SK-N-SH (cell line): ENCODE measurements at regions of chr3 and their contacts with region 1.

Region 1: GRCh38 chr3:52220380-52221026 is 4.9 kb downstream of the TLR9 start:
- DNase-seq: peak; percentile 93
- H3K4me3 ChIP-seq: peak overlapping the region in 1 of 2 experiments; percentile 38; a peak in 1 of 4 replicates
- H3K27ac ChIP-seq: no peak overlapping the region
- H3K4me1 ChIP-seq: peaks cover 12 to 19% of the 10 kb centered on the region in 2 experiments; a peak in 3 of 4 replicates
- H3K27me3 ChIP-seq: no peaks in the 10 kb centered on the region
- CTCF ChIP-seq: peak; percentile 88
- EP300 ChIP-seq: no peak
- RAD21 ChIP-seq: peak; percentile 81

Region 2: DNA sequence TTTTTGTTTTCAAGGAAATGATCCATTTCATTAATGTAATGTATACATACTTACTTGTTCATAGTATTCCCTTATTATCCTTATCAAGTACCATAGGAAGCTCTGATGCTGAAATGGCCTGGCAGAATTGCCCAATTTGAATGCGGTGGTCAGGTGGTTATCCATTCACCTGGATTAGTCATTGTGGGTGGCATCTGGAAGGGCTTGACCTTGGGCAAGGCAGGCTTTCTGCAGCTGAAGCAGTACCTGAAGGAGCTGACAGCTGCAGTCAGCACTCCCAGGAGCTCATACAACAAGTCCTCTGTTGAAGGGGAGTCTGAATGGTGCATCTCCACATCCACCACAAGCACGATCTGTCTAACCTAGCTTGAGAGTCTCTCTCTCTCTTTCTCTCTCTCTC is 332.9 kb before region 1 on chr3:
- CTCF ChIA-PET with region 1: no interaction called
- POLR2A ChIA-PET with region 1: no interaction called
- DNase-seq: no peak
- H3K4me3 ChIP-seq: no peak overlapping the region
- H3K27ac ChIP-seq: no peak overlapping the region
- H3K4me1 ChIP-seq: no peaks in the 10 kb centered on the region
- H3K27me3 ChIP-seq: no peaks in the 10 kb centered on the region; the same call in 1 of the 2 replicates
- CTCF ChIP-seq: no peak
- EP300 ChIP-seq: no peak
- RAD21 ChIP-seq: no peak

Region 3: GRCh38 chr3:52204337-52205073 is 16.0 kb before region 1 on chr3:
- CTCF ChIA-PET with region 1: interaction called, 44 read pairs
- POLR2A ChIA-PET with region 1: no interaction called
- DNase-seq: no peak
- H3K4me3 ChIP-seq: no peak overlapping the region
- H3K27ac ChIP-seq: no peak overlapping the region
- H3K4me1 ChIP-seq: no peaks in the 10 kb centered on the region
- H3K27me3 ChIP-seq: no peaks in the 10 kb centered on the region
- CTCF ChIP-seq: no peak
- EP300 ChIP-seq: no peak
- RAD21 ChIP-seq: no peak

Region 4: DNA sequence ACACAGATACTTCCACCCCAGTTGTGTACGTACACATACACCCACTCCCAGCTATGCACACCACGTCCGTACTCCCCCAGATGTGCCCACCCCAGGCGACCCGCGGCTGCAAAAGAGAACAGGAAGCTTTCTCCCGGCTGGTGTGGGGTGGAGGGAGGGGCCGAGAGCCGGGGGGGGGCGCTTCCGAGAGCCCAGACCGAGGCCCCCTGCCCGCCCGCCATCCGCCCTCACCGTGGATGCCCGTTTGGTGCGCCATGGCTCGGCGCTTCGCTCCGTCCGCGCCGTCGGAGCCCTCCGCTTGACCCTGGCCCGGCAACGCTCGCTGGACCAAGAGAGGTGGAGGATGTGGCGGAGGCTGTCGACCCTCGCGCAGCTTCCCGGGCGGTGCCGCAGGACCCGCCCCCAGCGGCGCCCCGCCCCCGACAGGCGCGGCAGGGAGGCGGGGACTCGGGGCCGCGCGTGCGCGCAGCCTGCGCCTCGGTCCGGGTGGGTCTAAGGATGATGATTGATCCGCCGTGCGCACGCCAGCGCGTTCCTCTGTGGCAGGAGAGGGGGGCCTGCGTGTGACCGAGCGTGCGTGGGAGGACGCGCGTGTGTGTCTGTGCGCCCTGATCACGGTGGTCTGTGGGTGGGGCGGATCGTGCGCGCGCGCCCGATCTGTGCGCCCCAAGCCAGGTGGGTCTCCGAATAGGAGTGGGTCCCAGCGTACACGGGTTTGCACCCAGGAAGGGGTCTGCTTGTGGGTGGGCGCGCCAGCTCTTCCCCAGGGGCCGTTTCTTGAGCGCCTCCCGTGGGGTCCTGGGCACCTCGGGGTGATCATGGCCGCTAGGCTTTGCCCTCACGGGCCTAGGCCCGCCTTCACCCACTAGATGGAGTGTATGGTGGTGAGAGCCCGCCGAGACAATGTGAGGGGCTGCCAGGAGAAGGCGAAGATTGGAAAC is 18.5 kb after region 1 on chr3 and contains the start of gene TWF2:
- CTCF ChIA-PET with region 1: interaction called, 257 read pairs
- POLR2A ChIA-PET with region 1: interaction called, 4 read pairs
- DNase-seq: peak; percentile 99
- H3K4me3 ChIP-seq: peak within 1 kb of the TSS; percentile 90 to 97
- H3K27ac ChIP-seq: peak within 1 kb of the TSS; percentile 93 to 96
- H3K4me1 ChIP-seq: peaks cover 8 to 49% of the 10 kb centered on the region in 2 experiments
- H3K27me3 ChIP-seq: no peaks in the 10 kb centered on the region
- CTCF ChIP-seq: peak; percentile 53
- EP300 ChIP-seq: no peak
- RAD21 ChIP-seq: no peak
- polyA plus RNA-seq, gene TWF2: 157 and 188 TPM in 2 replicates

Region 5: DNA sequence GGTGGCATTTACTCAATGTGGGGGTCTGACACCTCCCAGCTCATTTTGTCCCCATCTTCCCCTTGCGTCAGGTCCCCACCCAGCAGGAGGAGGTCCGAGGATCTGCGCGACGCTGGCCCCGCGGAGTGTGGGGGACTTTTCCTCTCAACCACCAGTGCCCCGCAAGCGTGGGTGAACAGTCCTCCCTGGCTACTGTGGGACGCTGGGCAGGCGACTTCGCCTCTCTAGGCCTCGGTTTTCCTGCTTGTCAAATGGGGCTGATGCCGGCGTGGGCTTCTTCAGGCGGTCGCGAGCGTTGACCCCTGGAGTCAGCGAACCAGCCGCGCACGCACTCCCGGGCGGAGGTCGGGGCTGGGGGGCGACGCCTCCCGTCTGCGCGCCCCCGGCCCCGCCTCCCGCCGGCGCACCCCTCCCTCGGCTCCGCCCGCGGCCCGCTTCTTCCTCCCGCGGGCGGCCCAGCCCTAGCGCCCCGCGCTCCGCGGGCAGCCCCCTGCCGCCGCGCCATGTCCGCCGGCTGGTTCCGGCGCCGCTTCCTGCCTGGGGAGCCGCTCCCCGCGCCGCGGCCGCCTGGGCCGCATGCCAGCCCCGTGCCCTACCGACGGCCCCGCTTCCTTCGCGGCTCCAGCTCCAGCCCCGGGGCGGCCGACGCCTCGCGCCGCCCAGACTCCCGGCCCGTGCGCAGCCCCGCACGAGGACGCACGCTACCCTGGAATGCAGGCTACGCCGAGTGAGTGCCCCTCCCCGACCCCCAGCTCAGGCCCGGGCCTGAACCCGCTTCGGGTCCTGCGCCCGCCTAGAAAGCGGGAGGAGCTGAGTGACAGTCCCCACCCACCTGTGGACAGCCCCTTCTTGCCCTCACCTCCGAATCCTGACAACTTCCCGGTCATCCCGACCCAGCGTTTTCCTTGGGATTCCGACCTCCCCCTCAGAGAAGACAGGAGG is 25.1 kb after region 1 on chr3 and contains the start of gene PPM1M:
- CTCF ChIA-PET with region 1: interaction called, 12 read pairs
- POLR2A ChIA-PET with region 1: interaction called, 4 read pairs
- DNase-seq: peak; percentile 90
- H3K4me3 ChIP-seq: peak within 1 kb of the TSS; percentile 57 to 60
- H3K27ac ChIP-seq: peak within 1 kb of the TSS; percentile 30 to 73; a peak in 3 of 4 replicates
- H3K4me1 ChIP-seq: peaks cover 4 to 43% of the 10 kb centered on the region in 2 experiments; a peak in 3 of 4 replicates
- H3K27me3 ChIP-seq: no peaks in the 10 kb centered on the region
- CTCF ChIP-seq: no peak
- EP300 ChIP-seq: no peak
- RAD21 ChIP-seq: no peak
- polyA plus RNA-seq, gene PPM1M: 19.2 and 23.9 TPM in 2 replicates

Region 6: DNA sequence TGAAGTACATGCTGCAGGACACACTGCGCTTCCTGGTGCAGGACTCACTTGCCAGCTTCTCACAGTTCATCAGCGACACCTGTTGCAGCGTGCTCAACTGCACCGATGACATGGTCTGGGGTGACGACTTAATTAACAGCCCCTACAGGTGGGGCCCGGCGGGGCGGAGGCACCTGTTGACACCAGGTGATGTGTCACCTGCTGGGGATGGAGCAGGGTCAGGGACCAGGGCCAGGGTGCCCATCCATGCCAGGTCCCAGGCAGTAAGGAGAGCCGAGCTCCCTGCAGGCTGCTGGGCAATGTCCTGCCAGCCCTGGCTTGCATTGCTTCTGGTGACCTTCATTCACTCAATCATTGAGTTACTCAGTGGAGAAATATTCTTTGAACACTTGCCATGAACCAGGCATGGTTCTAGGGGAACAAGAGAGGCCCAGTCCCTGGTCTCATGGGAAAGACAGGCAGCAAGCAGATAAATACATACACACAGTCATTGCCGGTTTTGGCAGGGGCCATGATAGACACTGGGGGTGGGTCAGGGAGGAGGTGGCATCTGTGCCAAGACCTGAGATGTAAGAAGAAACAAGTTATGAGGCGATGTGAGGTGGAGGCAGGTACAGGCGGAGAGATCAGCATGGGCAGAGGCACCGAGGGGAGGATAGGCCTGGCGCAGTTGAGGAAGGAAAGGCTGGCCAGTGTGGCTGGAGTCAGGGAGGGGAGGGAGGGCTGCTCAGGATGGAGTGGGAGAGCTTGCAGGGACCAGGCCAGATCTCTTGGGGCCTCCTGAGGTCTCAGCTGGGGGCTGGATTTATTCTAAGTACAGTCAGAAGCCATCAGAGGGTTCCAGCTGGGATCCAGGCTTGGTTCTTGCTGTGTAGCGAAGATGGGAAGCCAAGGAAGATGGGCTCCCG is 126.4 kb after region 1 on chr3:
- CTCF ChIA-PET with region 1: interaction called, 109 read pairs
- POLR2A ChIA-PET with region 1: no interaction called
- DNase-seq: no peak
- H3K4me3 ChIP-seq: no peak overlapping the region
- H3K27ac ChIP-seq: no peak overlapping the region
- H3K4me1 ChIP-seq: no peaks in the 10 kb centered on the region
- H3K27me3 ChIP-seq: no peaks in the 10 kb centered on the region
- CTCF ChIP-seq: no peak
- EP300 ChIP-seq: no peak
- RAD21 ChIP-seq: no peak

Region 7: DNA sequence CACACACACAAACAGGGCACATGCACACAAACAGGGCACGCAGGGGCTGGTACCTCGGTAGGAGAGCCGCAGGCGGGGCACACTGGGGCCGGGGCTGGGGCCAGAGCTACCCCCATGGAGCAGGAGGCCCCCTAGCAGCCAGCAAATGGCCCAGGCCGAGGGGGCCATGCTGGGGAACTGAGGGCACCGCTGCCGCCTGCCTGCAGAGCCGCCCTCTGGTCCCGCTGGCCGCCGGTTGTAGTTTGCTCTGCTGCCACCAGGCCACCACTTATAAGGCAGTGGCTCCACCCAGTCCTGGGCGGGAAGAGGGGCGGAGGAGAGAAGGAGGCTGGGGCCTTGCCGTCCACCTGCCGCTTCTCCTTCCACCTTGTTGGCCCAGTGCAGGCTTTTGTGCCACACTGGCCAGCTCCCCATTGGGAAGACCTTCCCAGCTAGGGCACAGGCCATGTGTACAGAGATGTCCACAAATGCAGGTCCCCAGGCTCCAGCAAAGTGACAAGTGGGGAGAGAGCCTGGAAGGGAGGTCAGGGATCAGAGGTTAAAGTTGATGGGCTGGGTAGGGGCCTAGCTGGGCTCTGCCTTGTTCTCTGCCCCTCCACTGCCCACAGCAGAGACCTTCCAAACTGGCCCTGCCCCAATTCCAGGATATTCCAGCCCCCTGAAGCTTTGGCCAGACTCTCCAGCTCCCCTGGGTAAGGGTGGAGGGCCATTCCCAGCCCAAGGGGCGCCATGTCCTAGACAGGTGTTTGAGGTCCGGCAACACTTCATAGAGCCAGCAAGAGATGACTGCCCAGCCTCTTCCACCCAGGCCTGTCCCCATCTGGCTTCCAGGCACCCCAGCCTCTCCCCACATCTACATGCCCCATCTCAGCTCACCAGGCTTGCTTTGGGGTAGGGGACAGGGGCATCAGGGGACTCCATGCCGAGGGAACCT is 224.6 kb after region 1 on chr3 and contains the start of gene SEMA3G:
- CTCF ChIA-PET with region 1: interaction called, 28 read pairs
- POLR2A ChIA-PET with region 1: no interaction called
- DNase-seq: peak; percentile 84
- H3K4me3 ChIP-seq: no peak within 1 kb of the TSS
- H3K27ac ChIP-seq: no peak within 1 kb of the TSS
- H3K4me1 ChIP-seq: peaks cover 0 to 5% of the 10 kb centered on the region in 2 experiments; a peak in 1 of 4 replicates
- H3K27me3 ChIP-seq: no peaks in the 10 kb centered on the region
- CTCF ChIP-seq: peak; percentile 40; the same call in 1 of the 2 replicates
- EP300 ChIP-seq: no peak
- RAD21 ChIP-seq: no peak
- polyA plus RNA-seq, gene SEMA3G: 0.10 and 0.13 TPM in 2 replicates

Region 8: DNA sequence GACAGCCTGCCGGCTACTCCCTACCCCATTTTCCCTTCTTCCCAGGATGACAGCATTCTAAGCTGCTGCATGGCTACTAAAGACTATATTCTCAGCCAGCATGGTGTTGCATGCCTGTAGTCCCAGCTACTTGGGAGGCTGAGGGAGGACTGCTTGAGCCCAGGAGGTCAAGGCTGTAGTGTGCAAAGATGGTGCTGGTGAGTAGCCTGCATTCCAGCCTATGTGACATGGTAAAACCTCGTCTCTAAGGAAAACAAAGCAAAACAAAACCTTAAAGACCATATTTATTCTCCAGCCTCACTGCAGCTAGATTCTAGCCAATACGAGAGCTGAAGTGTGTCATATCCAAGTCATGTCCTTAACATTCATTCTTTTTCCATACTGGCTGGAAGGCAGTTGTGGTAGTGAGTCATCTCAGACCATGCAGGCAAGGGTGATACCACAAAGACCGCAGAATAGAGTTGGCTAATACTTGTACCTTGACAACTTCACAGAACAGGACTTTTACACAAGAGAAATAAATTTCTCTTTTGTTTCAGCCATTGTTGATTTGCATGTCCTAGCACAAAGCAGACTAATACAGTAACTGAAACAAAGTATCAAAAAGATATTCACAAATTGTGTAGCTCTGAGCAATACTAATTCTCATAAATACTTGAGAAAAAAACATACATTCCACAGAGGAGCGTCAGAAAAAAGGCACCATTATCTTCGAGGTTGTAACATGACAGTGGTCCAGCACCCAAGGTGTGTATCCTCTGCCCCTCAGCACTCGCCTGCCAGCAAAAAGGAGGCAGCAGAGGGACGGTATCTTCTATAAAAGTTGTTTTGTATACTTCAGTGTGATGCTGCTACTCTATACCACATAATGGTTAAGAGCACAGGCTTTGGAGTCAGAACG is 450.4 kb after region 1 on chr3:
- CTCF ChIA-PET with region 1: no interaction called
- POLR2A ChIA-PET with region 1: no interaction called
- DNase-seq: no peak
- H3K4me3 ChIP-seq: peak overlapping the region in 1 of 2 experiments; percentile 28; a peak in 2 of 4 replicates
- H3K27ac ChIP-seq: peak overlapping the region; percentile 48 to 99
- H3K4me1 ChIP-seq: peaks cover 0 to 16% of the 10 kb centered on the region in 2 experiments; a peak in 2 of 4 replicates
- H3K27me3 ChIP-seq: no peaks in the 10 kb centered on the region
- CTCF ChIP-seq: no peak; the same call in 1 of the 2 replicates
- EP300 ChIP-seq: peak in 1 of 2 experiments; percentile 83; a peak in 1 of 4 replicates
- RAD21 ChIP-seq: no peak